Psoas muscle (tissue), 8 donors: ENCODE measurements at regions of chr10 and their contacts with region 1.

Region 1: DNA sequence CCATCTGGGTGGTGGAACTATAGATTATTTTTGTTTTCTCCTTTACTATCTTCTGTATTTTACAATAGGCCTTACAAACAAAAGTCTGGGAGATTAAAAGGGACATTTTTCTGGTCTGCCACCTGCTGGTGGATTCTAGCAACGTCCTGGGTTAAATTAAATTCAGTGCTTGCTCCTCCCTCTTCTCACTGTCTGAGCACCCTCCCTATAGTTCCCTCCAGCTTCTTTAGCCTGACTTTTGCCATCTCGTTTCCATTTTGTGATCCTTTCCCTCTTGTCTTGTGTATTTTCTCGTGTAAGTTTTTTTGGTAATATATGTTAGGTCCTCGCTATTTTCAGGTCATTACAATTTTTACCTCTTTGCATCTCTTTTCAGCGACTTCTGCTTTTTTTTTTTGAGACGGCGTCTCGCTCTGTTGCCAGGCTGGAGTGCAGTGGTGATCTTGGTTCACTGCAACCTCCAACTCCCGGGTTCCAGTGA is 16.1 kb downstream of the ANKRD16 start:
- DNase-seq: peak; percentile 32 to 64
- ATAC-seq: peak; percentile 62 to 88 (median 73)
- H3K4me3 ChIP-seq: no peak overlapping the region
- H3K27ac ChIP-seq: no peak overlapping the region
- H3K4me1 ChIP-seq: no peaks in the 10 kb centered on the region
- H3K27me3 ChIP-seq: no peaks in the 10 kb centered on the region
- CTCF ChIP-seq: peak; percentile 73

Region 2: GRCh38 chr10:5684318-5684970 is 189.1 kb before region 1 on chr10 and contains the start of gene TASOR2:
- intact Hi-C with region 1: loop called (anchors 5 to 10 kb)
- DNase-seq: peak; percentile 99
- ATAC-seq: peak; percentile 96 to 98 (median 98)
- H3K4me3 ChIP-seq: peak within 1 kb of the TSS; percentile 86
- H3K27ac ChIP-seq: peak within 1 kb of the TSS; percentile 97
- H3K4me1 ChIP-seq: peaks cover 21% of the 10 kb centered on the region
- H3K27me3 ChIP-seq: no peaks in the 10 kb centered on the region
- CTCF ChIP-seq: no peak
- total RNA-seq, gene TASOR2: 31.5 to 45.6 (median 39.0) TPM